Motor neuron (in vitro differentiated cells): ENCODE measurements at regions of chr15 and their contacts with region 1.

Region 1: GRCh38 chr15:79184465-79184892 is 93.9 kb upstream of the RASGRF1 start:
- ATAC-seq: peak; percentile 49 to 77 (median 64)
- H3K4me3 ChIP-seq: no peak overlapping the region
- H3K27ac ChIP-seq: no peak overlapping the region
- H3K4me1 ChIP-seq: peaks cover under 1 to 2% of the 10 kb centered on the region in 2 donors

Region 2: DNA sequence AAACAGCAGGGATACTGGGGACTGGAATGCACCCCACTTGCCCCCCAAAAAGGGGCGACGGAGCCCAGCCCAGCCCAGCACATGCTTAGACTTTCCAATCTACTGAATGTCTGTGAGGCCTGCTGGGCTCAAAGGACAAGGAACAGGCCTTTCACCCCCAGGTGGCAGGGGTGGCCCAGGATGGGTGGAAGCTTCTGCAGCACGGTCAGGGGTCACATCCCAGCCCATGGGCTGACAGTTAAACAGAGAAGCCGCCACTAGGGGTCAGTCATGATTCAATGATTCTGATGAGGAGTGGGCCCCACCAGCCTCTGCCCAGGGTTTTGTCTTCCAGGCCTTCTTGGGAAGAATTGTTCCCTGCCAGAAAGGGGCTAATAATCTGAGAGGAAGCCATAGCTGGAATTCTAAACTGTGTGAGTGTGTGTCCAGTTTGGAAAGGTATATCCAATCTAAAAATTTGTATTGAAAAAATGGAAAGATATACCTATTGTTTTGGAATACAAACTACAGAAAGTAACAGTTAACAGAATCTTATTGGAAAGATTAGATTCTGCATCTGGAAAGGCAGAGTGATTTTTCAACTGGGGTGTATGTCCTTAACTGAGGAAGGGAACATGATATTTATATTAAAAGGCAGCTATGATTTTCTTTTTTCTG is 545.7 kb before region 1 on chr15:
- in situ Hi-C with region 1: loop called in 1 of 9 experiments (anchors 25 kb)
- ATAC-seq: peak; percentile 24 to 77 (median 52)
- H3K4me3 ChIP-seq: no peak overlapping the region
- H3K27ac ChIP-seq: no peak overlapping the region
- H3K4me1 ChIP-seq: peaks cover 28 to 33% of the 10 kb centered on the region in 2 donors

Region 3: GRCh38 chr15:78909791-78910228 is 274.7 kb before region 1 on chr15:
- in situ Hi-C with region 1: loop called in 4 of 9 experiments (anchors 25 kb)
- ATAC-seq: peak; percentile 14 to 75 (median 57)
- H3K4me3 ChIP-seq: no peak overlapping the region
- H3K27ac ChIP-seq: no peak overlapping the region
- H3K4me1 ChIP-seq: peaks cover 0 to 3% of the 10 kb centered on the region in 2 donors

Region 4: DNA sequence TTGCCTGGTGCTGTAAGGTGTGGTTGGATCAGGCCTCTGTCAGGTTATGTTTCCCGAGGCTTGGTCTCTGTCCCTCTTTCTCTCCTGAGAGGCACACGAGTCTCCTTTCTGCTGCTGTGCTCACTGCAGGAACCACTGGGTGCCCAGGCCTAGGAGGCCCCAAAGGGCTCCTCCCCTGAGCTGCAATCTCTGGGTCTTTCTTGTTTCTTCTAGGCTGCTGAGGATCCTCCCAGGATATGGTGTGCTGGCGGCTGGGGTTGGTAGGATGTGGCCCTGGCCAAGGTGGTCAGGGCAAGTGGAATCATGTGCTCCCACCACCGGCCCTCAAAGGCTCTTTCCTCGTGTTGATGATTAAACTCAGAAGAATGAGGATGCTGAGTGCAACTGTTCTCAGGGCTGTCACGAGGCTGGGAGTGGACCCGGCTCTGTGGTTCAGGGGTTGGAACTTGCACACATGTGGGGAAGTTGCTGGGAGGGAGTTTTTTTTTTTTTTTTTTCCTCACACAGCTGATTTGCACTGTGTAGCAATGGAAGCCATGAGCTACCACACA is 196.0 kb before region 1 on chr15:
- in situ Hi-C with region 1: no loop called
- ATAC-seq: peak; percentile 88 to 99 (median 91)
- H3K4me3 ChIP-seq: no peak overlapping the region
- H3K27ac ChIP-seq: no peak overlapping the region
- H3K4me1 ChIP-seq: peaks cover 0 to 9% of the 10 kb centered on the region in 2 donors

Region 5: GRCh38 chr15:79028411-79028964 is 156.0 kb before region 1 on chr15:
- in situ Hi-C with region 1: loop called in 3 of 9 experiments (anchors 10 to 25 kb)
- ATAC-seq: peak in 3 of 8 experiments; percentile 29 to 58 (median 57)
- H3K4me3 ChIP-seq: no peak overlapping the region
- H3K27ac ChIP-seq: no peak overlapping the region
- H3K4me1 ChIP-seq: no peaks in the 10 kb centered on the region

Region 6: GRCh38 chr15:79339564-79340314 is 155.3 kb after region 1 on chr15:
- in situ Hi-C with region 1: no loop called
- ATAC-seq: peak in 7 of 8 experiments; percentile 32 to 52 (median 42)
- H3K4me3 ChIP-seq: no peak overlapping the region
- H3K27ac ChIP-seq: no peak overlapping the region
- H3K4me1 ChIP-seq: no peaks in the 10 kb centered on the region

Region 7: GRCh38 chr15:79496838-79497237 is 312.4 kb after region 1 on chr15:
- in situ Hi-C with region 1: no loop called
- ATAC-seq: no peak
- H3K4me3 ChIP-seq: no peak overlapping the region
- H3K27ac ChIP-seq: no peak overlapping the region
- H3K4me1 ChIP-seq: peaks cover 39 to 45% of the 10 kb centered on the region in 2 donors